PC-9 (cell line): ENCODE measurements at regions of chr4 and their contacts with region 1.

Region 1: DNA sequence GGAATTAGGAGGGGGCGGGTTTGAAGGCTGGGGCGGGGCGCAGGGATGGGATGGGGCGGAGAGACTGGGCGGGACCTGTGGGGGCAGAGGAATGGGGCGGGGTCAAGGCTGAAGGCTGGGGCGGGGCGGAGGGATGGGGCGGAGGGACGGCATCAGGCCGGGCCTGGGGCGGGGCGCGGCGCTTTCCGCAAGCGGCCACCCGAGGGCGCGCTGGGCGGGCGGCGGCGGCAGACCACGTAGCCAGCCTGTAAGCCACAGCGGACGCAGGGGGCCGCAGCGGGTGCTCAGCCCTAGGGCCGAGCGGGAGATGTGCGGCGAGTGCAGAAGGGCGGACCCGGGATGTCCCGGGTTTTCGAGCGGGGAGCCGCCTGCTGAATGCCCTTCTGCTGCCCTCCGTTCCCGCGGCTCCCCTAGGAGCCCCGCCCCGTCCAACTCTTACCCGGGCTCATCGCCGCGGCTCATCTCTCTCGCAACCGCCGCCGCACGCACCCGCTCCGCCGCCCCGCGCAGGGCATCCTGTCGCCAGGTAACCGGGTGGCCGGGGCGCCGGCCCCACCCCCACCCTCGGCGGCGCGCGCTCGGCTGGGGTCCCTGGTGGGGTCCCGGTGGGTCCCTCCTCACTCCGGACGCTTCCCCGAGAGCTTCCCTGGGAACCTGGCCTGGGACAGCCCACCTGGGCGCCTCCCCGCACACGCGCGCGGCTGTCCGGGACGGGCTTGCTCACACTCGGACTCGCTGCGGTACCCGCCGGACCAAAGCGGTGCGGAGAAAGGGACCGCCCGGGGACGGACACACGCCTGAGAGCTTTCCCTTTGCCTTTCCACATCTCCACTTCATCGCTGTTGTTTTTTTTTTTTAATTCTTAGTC is at the start of gene CCDC110:
- DNase-seq: peak; percentile 46 to 91
- H3K4me3 ChIP-seq: peak within 1 kb of the TSS; percentile 73
- H3K27ac ChIP-seq: no peak within 1 kb of the TSS
- H3K4me1 ChIP-seq: 0 out of 2 replicates have a peak, but pooled peaks cover 4% of the 10 kb centered on the region
- H3K27me3 ChIP-seq: no peaks in the 10 kb centered on the region
- CTCF ChIP-seq: peak; percentile 52; the same call in 1 of the 2 replicates
- total RNA-seq, gene CCDC110: 2.1 and 4.3 TPM in 2 replicates

Region 2: GRCh38 chr4:185203486-185204237 is 267.8 kb before region 1 on chr4 and contains the start of gene CFAP97:
- CTCF ChIA-PET with region 1: no interaction called
- POLR2A ChIA-PET with region 1: no interaction called
- intact Hi-C with region 1: loop called (anchors 10 kb)
- DNase-seq: peak; percentile 49 to 78
- H3K4me3 ChIP-seq: peak within 1 kb of the TSS; percentile 75
- H3K27ac ChIP-seq: peak within 1 kb of the TSS; percentile 76
- H3K4me1 ChIP-seq: peaks cover 35% of the 10 kb centered on the region
- H3K27me3 ChIP-seq: no peaks in the 10 kb centered on the region
- CTCF ChIP-seq: no peak
- total RNA-seq, gene CFAP97: 33.4 and 48.2 TPM in 2 replicates

Region 3: DNA sequence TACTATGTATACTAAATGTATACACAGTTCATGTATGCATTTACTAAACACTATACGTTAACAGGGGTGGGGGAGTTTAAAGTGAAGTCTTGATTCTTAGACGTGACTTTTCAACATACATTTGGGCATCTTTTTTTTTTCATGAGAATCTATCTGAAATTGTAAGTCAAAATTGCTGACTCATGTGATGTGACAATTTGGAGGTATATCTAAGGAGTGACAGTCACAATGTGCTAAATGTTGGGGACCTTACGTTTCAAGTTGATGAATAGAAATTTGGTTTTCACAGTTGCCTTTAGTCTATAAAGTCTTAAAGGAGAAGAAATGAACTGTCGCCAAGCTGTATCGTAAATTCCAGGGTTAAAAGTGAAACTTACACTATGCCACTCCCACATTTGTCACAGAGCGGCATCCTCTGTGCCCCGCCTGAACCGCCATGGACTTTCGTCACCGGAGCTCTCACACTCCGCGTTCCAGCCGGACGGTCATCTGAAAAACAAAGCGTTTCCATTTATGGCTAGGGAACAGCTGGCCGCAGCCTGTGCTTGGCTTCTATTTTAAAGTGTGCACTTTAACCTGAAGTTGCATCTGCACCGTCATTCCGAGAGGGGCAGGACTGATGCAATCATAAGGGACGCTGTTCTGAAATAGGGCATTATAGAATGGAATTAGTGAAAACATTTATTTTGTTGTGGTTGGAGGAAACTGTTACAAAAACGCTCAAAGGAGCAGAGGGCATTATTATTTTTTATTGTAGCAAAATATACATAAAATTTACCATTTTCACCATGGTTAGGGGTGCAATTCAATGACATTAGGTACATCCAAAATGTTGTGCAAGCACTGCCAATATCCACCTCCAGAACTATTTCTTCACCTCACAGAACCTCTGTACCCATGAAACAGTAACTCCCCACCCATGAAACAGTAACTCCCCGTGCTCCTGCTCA is 32.9 kb after region 1 on chr4:
- CTCF ChIA-PET with region 1: no interaction called
- POLR2A ChIA-PET with region 1: no interaction called
- intact Hi-C with region 1: no loop called
- DNase-seq: no peak
- H3K4me3 ChIP-seq: no peak overlapping the region
- H3K27ac ChIP-seq: no peak overlapping the region
- H3K4me1 ChIP-seq: peaks cover 13% of the 10 kb centered on the region
- H3K27me3 ChIP-seq: no peaks in the 10 kb centered on the region
- CTCF ChIP-seq: no peak

Region 4: DNA sequence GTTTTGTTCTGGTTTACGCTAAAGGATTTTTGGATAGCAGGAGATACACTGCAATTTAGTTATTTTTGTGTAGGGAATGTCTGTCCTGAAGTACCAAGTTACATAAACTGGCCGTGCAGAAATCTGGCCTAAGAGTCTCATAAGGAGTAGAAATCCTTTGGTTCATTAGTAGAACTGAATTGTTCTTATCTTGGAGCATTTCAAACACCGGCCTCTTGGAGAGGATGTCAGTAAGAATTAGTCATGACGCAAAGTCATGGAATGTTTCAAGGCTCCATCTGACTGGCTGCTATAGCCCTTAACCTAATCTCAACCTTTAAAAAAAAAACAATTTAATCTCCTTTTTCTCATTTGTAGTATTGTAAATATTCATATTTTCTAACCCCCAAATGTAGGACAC is 48.6 kb after region 1 on chr4:
- CTCF ChIA-PET with region 1: no interaction called
- POLR2A ChIA-PET with region 1: no interaction called
- intact Hi-C with region 1: no loop called
- DNase-seq: no peak
- H3K4me3 ChIP-seq: no peak overlapping the region
- H3K27ac ChIP-seq: no peak overlapping the region
- H3K4me1 ChIP-seq: no peaks in the 10 kb centered on the region
- H3K27me3 ChIP-seq: no peaks in the 10 kb centered on the region
- CTCF ChIP-seq: no peak

Region 5: DNA sequence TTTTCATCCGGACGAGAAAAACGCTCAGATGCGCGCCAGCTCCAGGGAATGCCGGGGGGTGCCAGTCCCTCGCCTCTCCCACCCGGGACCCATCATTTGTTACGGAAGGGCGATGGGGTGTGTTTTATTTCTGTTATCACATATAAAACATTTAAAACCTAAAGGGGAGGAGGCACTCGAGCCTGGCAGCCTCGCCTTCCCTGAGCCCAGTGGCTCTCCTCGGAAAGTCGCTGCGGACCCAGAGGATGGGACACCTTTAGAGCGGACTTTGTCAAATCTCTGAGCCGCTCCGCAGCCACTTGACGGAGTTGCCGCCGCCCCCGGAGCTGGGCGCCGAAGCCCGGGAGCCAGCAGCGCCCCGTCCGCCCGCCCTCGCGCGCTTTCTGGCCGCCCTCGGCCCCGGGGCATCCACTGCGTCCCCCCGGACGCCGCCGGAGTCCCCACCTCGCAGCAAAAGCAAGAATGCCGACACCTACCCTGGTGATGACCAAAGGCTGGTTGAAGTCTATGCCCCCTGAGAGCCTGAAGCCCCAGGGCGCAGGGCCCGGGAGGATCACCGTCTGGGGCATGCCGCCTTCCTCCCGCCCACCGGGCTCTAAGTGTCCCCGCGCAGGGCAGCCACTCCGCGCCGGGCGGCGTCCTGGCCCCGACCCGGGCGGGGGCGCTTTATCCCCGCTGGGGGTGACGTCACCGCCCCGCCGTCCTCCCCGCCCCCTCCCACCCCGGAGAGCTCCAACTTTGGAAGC is 63.6 kb after region 1 on chr4 and contains the start of gene PDLIM3:
- CTCF ChIA-PET with region 1: interaction called, 4 read pairs
- POLR2A ChIA-PET with region 1: no interaction called
- intact Hi-C with region 1: loop called (anchors 2 kb)
- DNase-seq: peak in 1 of 2 experiments; percentile 62
- H3K4me3 ChIP-seq: peak within 1 kb of the TSS; percentile 73
- H3K27ac ChIP-seq: no peak within 1 kb of the TSS
- H3K4me1 ChIP-seq: no peaks in the 10 kb centered on the region
- H3K27me3 ChIP-seq: no peaks in the 10 kb centered on the region
- CTCF ChIP-seq: no peak
- total RNA-seq, gene PDLIM3: 3.3 and 5.6 TPM in 2 replicates

Region 6: DNA sequence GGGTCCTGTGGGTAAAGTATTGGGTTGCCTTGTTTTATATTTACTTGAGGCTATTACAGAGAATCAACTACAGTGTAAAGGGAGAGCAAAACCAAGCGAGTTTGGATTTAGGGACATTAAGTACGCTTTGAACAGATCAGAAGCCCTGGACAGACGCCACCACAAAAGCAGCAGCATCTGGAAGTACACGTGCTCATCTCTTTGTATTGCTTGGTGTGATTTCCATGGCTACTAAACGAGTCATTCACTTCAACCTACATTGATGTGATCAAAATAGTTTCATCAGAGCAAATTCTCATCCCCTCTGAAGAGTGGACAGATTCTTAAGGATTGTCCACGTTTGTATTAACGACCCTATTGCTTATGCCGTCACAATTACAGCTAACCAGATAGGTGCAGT is 255.5 kb after region 1 on chr4:
- CTCF ChIA-PET with region 1: no interaction called
- POLR2A ChIA-PET with region 1: no interaction called
- intact Hi-C with region 1: no loop called
- DNase-seq: no peak
- H3K4me3 ChIP-seq: no peak overlapping the region
- H3K27ac ChIP-seq: no peak overlapping the region
- H3K4me1 ChIP-seq: no peaks in the 10 kb centered on the region
- H3K27me3 ChIP-seq: no peaks in the 10 kb centered on the region
- CTCF ChIP-seq: no peak

Region 7: GRCh38 chr4:185969657-185970056 is 498.2 kb after region 1 on chr4:
- CTCF ChIA-PET with region 1: no interaction called
- POLR2A ChIA-PET with region 1: no interaction called
- intact Hi-C with region 1: no loop called
- DNase-seq: no peak
- H3K4me3 ChIP-seq: no peak overlapping the region
- H3K27ac ChIP-seq: no peak overlapping the region
- H3K4me1 ChIP-seq: peaks cover 37% of the 10 kb centered on the region
- H3K27me3 ChIP-seq: no peaks in the 10 kb centered on the region
- CTCF ChIP-seq: no peak